ENCODE measurements at regions of chr17 and their contacts with region 1.

Region 1: GRCh38 chr17:50686494-50687199 is 21.1 kb downstream of the ANKRD40 start:
- DNase-seq: peak; percentile 98
- ATAC-seq: peak; percentile 78
- H3K4me3 ChIP-seq: peak overlapping the region; percentile 33 to 75 (median 66)
- H3K27ac ChIP-seq: peak overlapping the region; percentile 99
- H3K4me1 ChIP-seq: peaks cover 98% of the 10 kb centered on the region
- H3K27me3 ChIP-seq: no peaks in the 10 kb centered on the region; a peak in 1 of 5 replicates
- CTCF ChIP-seq: 0 out of 2 replicates have a peak, but pooled peaks have one; percentile 10
- EP300 ChIP-seq: peak; percentile 94
- POLR2A ChIP-seq: peak; percentile 86 to 98
- RAD21 ChIP-seq: peak; percentile 6; the same call in 1 of the 2 replicates

Region 2: GRCh38 chr17:50547035-50547735 is 139.5 kb before region 1 on chr17 and contains the start of gene SPATA20:
- CTCF ChIA-PET with region 1: interaction called, 8 read pairs
- POLR2A ChIA-PET with region 1: interaction called, 79 read pairs
- in situ Hi-C with region 1: loop called (anchors 5 kb)
- intact Hi-C with region 1: no loop called
- DNase-seq: peak; percentile 88
- ATAC-seq: peak; percentile 76
- H3K4me3 ChIP-seq: peak within 1 kb of the TSS; percentile 63 to 87 (median 79)
- H3K27ac ChIP-seq: peak within 1 kb of the TSS; percentile 62
- H3K4me1 ChIP-seq: peaks cover 74% of the 10 kb centered on the region
- H3K27me3 ChIP-seq: no peaks in the 10 kb centered on the region; a peak in 1 of 5 replicates
- CTCF ChIP-seq: peak; percentile 99
- EP300 ChIP-seq: peak in 1 of 2 experiments; percentile 31; a peak in 1 of 4 replicates
- POLR2A ChIP-seq: peak; percentile 81 to 89
- RAD21 ChIP-seq: peak; percentile 100
- total RNA-seq, gene SPATA20: 35.7 and 64.8 TPM in 2 replicates

Region 3: DNA sequence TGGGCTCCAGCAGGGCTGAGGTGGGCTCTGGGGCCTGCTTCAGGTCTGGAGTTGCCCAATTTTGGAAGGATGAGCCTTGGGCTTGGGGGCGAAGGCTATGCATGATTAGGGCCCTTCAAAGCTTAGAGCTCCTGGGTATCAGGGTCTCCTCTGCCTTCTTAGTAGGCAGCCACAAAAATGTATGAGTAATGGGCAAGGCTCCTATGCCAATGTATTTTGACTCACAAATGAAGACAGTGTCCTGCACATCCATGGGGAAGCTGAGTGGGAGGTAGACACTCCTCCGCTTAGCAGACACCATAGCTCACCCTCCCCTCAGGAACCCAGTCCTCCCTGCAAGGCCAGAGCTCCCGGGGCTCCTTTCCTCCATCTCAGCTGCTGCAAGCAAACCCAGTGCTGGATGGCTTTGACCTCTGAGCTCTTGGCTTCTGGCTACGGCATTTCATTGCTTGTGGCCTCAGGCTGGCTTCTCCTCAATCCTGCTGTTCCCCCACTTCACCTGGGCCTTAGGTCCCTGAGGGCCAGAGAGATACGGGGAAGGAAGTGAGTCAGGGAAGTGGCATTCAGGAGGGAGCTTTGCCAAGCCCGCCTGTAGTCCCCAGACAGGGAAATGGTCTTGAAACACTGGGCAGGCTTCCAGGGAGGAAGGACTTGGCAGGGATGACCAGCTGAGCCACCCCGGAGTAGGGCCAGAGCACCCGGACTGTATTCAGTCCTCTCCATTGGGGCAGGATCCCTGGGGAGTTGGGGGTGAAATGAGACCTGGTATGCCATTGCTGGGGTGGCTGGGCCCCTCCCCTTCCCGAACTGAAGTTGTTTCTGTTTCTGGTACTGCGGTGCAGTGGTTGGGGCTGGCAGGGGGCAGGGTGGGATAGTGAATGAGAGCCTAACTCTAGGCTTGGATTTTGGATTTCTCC is 47.5 kb before region 1 on chr17:
- CTCF ChIA-PET with region 1: no interaction called
- POLR2A ChIA-PET with region 1: interaction called, 839 read pairs
- in situ Hi-C with region 1: no loop called
- intact Hi-C with region 1: loop called (anchors 2 kb)
- DNase-seq: peak; percentile 58
- ATAC-seq: peak; percentile 1; the same call in 2 of the 3 replicates
- H3K4me3 ChIP-seq: peak overlapping the region in 1 of 3 experiments; percentile 45; a peak in 2 of 6 replicates
- H3K27ac ChIP-seq: peak overlapping the region; percentile 56
- H3K4me1 ChIP-seq: peaks cover 95% of the 10 kb centered on the region
- H3K27me3 ChIP-seq: peaks cover 0 to 3% of the 10 kb centered on the region in 2 experiments; a peak in 2 of 5 replicates
- CTCF ChIP-seq: no peak
- EP300 ChIP-seq: no peak; a peak in 1 of 4 replicates
- POLR2A ChIP-seq: no peak
- RAD21 ChIP-seq: no peak

Region 4: DNA sequence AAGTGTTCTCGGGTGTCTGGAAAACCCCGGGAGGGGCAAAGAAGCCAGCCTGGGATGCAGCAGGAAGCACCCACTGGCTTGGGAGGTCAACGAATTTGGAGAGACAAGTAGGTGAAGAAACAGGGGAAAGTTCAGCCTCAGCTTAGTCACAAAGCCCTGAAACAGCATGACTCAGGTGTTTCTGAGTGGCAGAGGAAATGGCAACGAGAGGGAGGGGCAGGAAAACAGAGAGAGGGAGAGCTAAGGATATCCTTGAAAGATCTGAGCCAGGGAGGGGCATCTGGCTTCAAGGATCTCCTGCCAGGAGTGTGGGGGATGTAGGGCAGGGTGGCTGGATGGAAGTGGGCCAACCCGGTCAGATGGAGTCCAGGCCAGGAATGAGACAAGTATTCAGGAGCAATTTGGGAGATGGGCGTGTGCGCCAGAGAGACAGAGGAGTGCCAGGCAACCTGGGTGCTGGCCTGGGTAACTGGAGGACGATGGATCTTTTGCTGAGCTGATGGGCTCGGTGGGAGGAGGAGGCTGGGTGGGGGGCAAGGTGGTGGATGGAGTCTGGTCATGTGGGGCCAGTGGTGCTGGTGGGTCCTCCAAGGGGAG is 24.8 kb before region 1 on chr17:
- CTCF ChIA-PET with region 1: no interaction called
- POLR2A ChIA-PET with region 1: interaction called, 140 read pairs
- in situ Hi-C with region 1: no loop called
- intact Hi-C with region 1: no loop called
- DNase-seq: peak; percentile 93
- ATAC-seq: peak; percentile 42
- H3K4me3 ChIP-seq: peak overlapping the region in 1 of 3 experiments; percentile 11; a peak in 2 of 6 replicates
- H3K27ac ChIP-seq: peak overlapping the region; percentile 82
- H3K4me1 ChIP-seq: peaks cover 76% of the 10 kb centered on the region
- H3K27me3 ChIP-seq: no peaks in the 10 kb centered on the region
- CTCF ChIP-seq: no peak
- EP300 ChIP-seq: peak; percentile 31 to 94; a peak in 3 of 4 replicates
- POLR2A ChIP-seq: peak in 1 of 2 experiments; percentile 48; a peak in 1 of 4 replicates
- RAD21 ChIP-seq: no peak

Region 5: GRCh38 chr17:50707289-50708049 is 20.8 kb after region 1 on chr17 and contains the start of gene ANKRD40:
- CTCF ChIA-PET with region 1: interaction called, 3 read pairs
- POLR2A ChIA-PET with region 1: interaction called, 97 read pairs
- in situ Hi-C with region 1: no loop called
- intact Hi-C with region 1: no loop called
- DNase-seq: peak; percentile 88
- ATAC-seq: peak; percentile 82
- H3K4me3 ChIP-seq: peak within 1 kb of the TSS; percentile 87 to 92 (median 88)
- H3K27ac ChIP-seq: peak within 1 kb of the TSS; percentile 91
- H3K4me1 ChIP-seq: peaks cover 56% of the 10 kb centered on the region
- H3K27me3 ChIP-seq: no peaks in the 10 kb centered on the region; a peak in 1 of 5 replicates
- CTCF ChIP-seq: no peak
- EP300 ChIP-seq: peak; percentile 69 to 75
- POLR2A ChIP-seq: peak; percentile 59 to 65; a peak in 3 of 4 replicates
- RAD21 ChIP-seq: peak; percentile 55
- total RNA-seq, gene ANKRD40: 46.4 and 52.4 TPM in 2 replicates

Measured in HepG2 (cell line).